Activated CD4-positive, alpha-beta T cell treated with anti-CD3 and anti-CD28 coated beads, Interleukin-2, amount 10 ng/mL, durations not matched to agents 7 days and 5 days (primary cell): ENCODE measurements at regions of chr7 and their contacts with region 1.

Region 1: GRCh38 chr7:128425850-128426249 is 16.1 kb upstream of the IMPDH1 start:
- DNase-seq: peak; percentile 84
- H3K4me3 Mint-ChIP-seq: no peak overlapping the region
- H3K27ac Mint-ChIP-seq: no peak overlapping the region
- H3K4me1 Mint-ChIP-seq: peaks cover 4% of the 10 kb centered on the region
- H3K27me3 Mint-ChIP-seq: peaks cover 7% of the 10 kb centered on the region

Region 2: DNA sequence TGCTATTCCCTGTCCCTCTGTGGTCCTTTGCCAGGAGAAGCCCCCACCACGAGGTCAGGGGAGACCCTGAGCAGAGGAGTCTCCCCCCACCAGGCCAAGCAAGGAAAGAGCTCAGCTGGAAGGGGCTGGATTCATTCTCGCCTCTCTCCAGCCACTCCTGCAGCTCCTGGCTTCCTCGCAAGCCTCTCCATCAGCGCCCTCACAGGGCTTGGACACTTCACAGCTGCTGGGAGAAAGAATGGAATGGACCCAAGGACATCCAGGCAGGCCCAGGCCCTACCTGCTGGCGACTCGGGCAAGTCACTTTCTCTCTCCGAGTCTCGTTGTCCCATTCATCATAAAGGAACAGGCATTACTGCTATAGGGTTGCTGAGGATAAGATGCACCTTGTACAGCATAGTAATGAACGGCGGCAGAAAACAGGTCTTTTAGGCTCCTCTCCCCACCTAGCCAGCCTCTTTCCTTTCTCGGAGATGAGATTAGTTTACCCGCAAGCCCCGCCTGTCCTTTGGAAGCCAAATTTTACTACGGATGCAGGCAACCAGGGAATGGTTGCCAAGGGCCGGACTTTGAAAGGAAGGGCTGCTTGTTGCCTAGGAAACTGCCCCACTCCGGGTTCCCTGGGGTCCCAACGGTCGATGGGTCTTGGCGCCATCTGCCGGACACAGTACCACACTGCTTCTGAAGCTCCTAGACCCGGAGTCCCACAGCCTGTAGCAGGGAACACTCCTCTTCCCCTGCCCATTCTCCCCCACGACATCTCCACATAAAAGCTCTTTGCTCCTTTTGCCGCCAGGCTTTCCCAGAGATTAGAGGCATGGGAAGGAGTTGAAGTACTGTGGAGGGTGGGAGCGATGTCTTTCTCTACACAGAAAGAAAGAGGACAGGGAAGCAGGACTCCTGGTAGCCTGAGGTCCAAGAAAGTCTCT is 38.4 kb before region 1 on chr7:
- CTCF ChIA-PET with region 1: interaction called, 19 read pairs
- POLR2A ChIA-PET with region 1: no interaction called
- DNase-seq: peak; percentile 71
- H3K4me3 Mint-ChIP-seq: no peak overlapping the region
- H3K27ac Mint-ChIP-seq: no peak overlapping the region
- H3K4me1 Mint-ChIP-seq: peaks cover 2% of the 10 kb centered on the region
- H3K27me3 Mint-ChIP-seq: no peaks in the 10 kb centered on the region

Region 3: GRCh38 chr7:128409596-128410160 is 16.2 kb before region 1 on chr7 and contains the start of gene IMPDH1:
- CTCF ChIA-PET with region 1: interaction called, 55 read pairs
- POLR2A ChIA-PET with region 1: no interaction called
- DNase-seq: peak; percentile 85
- H3K4me3 Mint-ChIP-seq: peak within 1 kb of the TSS; percentile 85
- H3K27ac Mint-ChIP-seq: peak within 1 kb of the TSS; percentile 86
- H3K4me1 Mint-ChIP-seq: peaks cover 37% of the 10 kb centered on the region
- H3K27me3 Mint-ChIP-seq: peaks cover 19% of the 10 kb centered on the region
- total RNA-seq, gene IMPDH1: 70.4 to 72.3 TPM

Region 4: DNA sequence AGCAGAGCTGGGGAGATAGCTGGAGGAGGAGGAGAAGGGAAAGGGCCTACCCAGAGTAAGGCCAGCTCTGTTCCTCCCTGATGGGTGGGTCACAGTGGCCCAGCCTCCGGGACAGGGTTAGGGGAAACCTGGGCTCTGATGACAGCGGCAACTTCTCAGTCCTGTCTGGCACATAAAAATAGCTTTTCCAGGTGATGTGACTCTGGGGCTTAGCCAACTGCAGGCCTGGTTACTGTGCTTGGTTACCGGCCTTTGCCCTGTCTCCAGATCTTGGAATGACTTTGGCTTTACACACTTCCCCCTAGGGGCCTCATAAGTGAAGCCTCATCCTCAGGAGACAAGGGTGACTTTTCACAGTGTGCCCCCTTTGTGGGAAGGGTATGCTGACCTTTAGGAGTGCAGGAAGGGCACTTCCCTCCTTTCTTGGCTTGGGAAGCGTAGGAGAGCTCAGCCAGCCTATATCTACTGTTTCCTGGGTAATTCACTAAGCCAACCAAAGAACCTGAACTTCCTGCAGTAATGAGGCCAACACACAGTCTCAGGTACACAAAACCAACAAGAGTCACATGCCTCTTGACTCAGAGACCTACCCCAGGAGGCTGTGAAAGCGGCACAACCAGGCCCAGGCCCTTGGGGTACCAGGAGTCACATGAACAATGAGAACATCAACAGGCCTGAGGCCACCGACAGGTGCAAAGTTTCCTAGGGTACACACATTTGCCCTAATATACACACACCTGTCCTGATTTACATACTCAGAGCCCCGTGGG is 18.2 kb after region 1 on chr7:
- CTCF ChIA-PET with region 1: interaction called, 21 read pairs
- POLR2A ChIA-PET with region 1: no interaction called
- DNase-seq: no peak
- H3K4me3 Mint-ChIP-seq: no peak overlapping the region
- H3K27ac Mint-ChIP-seq: no peak overlapping the region
- H3K4me1 Mint-ChIP-seq: peaks cover 7% of the 10 kb centered on the region
- H3K27me3 Mint-ChIP-seq: no peaks in the 10 kb centered on the region

Region 5: GRCh38 chr7:128455551-128456254 is 29.9 kb after region 1 on chr7 and contains the start of gene HILPDA:
- CTCF ChIA-PET with region 1: interaction called, 116 read pairs
- POLR2A ChIA-PET with region 1: interaction called, 4 read pairs
- DNase-seq: peak; percentile 93
- H3K4me3 Mint-ChIP-seq: peak within 1 kb of the TSS; percentile 91
- H3K27ac Mint-ChIP-seq: peak within 1 kb of the TSS; percentile 93
- H3K4me1 Mint-ChIP-seq: peaks cover 56% of the 10 kb centered on the region
- H3K27me3 Mint-ChIP-seq: peaks cover 10% of the 10 kb centered on the region
- total RNA-seq, gene HILPDA: 10.8 to 11.9 TPM

Region 6: GRCh38 chr7:128710481-128710880 is 284.6 kb after region 1 on chr7:
- CTCF ChIA-PET with region 1: no interaction called
- POLR2A ChIA-PET with region 1: no interaction called
- DNase-seq: no peak
- H3K4me3 Mint-ChIP-seq: no peak overlapping the region
- H3K27ac Mint-ChIP-seq: no peak overlapping the region
- H3K4me1 Mint-ChIP-seq: no peaks in the 10 kb centered on the region
- H3K27me3 Mint-ChIP-seq: peaks cover 18% of the 10 kb centered on the region

Region 7: GRCh38 chr7:130322587-130322986 is 1896.7 kb after region 1 on chr7:
- CTCF ChIA-PET with region 1: no interaction called
- POLR2A ChIA-PET with region 1: no interaction called
- DNase-seq: no peak
- H3K4me3 Mint-ChIP-seq: no peak overlapping the region
- H3K27ac Mint-ChIP-seq: no peak overlapping the region
- H3K4me1 Mint-ChIP-seq: no peaks in the 10 kb centered on the region
- H3K27me3 Mint-ChIP-seq: no peaks in the 10 kb centered on the region